Activated B cell treated with CpG ODN at 0.5 μM for 24 hours (primary cell): ENCODE measurements at regions of chr12 and their contacts with region 1.

Region 1: DNA sequence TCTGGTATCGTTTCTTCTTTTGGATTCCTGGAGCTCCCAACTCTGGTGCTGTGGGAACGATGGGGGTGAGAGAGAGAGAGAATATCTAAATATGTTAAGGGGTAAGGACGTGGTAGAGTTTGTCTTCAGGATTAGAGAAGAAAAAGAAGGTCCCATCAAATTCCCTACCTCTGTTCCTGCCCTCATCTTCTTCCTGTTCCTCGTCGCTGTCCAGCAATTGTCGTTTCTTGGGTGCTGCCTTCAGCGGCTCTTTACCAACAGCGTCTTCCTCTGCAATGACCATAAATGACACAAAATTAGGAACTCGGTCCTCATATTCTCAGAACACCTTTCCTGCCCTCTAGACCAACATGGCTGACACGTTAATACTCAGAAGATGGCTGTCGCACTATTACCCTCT is 31.5 kb downstream of the TIMELESS start:
- DNase-seq: no peak
- ATAC-seq: no peak
- H3K4me3 Mint-ChIP-seq: no peak overlapping the region
- H3K27ac Mint-ChIP-seq: no peak overlapping the region
- H3K4me1 Mint-ChIP-seq: no peaks in the 10 kb centered on the region
- H3K27me3 Mint-ChIP-seq: no peaks in the 10 kb centered on the region
- CTCF ChIP-seq: no peak

Region 2: GRCh38 chr12:56377310-56377988 is 40.3 kb before region 1 on chr12:
- CTCF ChIA-PET with region 1: no interaction called
- POLR2A ChIA-PET with region 1: interaction called, 4 read pairs
- intact Hi-C with region 1: loop called (anchors 5 kb)
- DNase-seq: no peak
- ATAC-seq: no peak
- H3K4me3 Mint-ChIP-seq: no peak overlapping the region
- H3K27ac Mint-ChIP-seq: peak overlapping the region; percentile 94
- H3K4me1 Mint-ChIP-seq: peaks cover 53% of the 10 kb centered on the region
- H3K27me3 Mint-ChIP-seq: no peaks in the 10 kb centered on the region
- CTCF ChIP-seq: no peak

Region 3: DNA sequence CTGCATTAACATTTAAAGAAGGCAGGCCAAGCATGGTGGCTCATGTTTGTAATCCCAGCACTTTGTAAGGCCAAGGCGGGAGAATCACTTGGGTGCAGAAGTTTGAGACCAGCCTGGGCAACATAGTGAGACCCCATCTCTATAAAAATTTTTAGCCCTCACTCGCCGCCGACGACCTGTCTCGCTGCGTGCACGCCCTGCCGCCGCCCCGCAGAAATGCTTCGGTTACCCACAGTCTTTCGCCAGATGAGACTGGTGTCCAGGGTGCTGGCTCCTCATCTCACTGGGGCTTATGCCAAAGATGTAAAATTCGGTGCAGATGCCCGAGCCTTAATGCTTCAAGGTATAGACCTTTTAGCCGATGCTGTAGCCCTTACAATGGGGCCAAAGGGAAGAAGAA is 93.0 kb after region 1 on chr12:
- CTCF ChIA-PET with region 1: no interaction called
- POLR2A ChIA-PET with region 1: no interaction called
- intact Hi-C with region 1: no loop called
- DNase-seq: no peak
- ATAC-seq: no peak
- H3K4me3 Mint-ChIP-seq: no peak overlapping the region
- H3K27ac Mint-ChIP-seq: no peak overlapping the region
- H3K4me1 Mint-ChIP-seq: peaks cover 2% of the 10 kb centered on the region
- H3K27me3 Mint-ChIP-seq: peaks cover 1% of the 10 kb centered on the region
- CTCF ChIP-seq: no peak

Region 4: GRCh38 chr12:56766535-56766934 is 348.8 kb after region 1 on chr12:
- CTCF ChIA-PET with region 1: no interaction called
- POLR2A ChIA-PET with region 1: no interaction called
- intact Hi-C with region 1: no loop called
- DNase-seq: no peak
- ATAC-seq: peak; percentile 99
- H3K4me3 Mint-ChIP-seq: peak overlapping the region; percentile 37
- H3K27ac Mint-ChIP-seq: peak overlapping the region; percentile 62
- H3K4me1 Mint-ChIP-seq: peaks cover 11% of the 10 kb centered on the region
- H3K27me3 Mint-ChIP-seq: no peaks in the 10 kb centered on the region
- CTCF ChIP-seq: no peak